Head of caudate nucleus (tissue), 42 donors: ENCODE measurements at regions of chr9 and their contacts with region 1.

Region 1: DNA sequence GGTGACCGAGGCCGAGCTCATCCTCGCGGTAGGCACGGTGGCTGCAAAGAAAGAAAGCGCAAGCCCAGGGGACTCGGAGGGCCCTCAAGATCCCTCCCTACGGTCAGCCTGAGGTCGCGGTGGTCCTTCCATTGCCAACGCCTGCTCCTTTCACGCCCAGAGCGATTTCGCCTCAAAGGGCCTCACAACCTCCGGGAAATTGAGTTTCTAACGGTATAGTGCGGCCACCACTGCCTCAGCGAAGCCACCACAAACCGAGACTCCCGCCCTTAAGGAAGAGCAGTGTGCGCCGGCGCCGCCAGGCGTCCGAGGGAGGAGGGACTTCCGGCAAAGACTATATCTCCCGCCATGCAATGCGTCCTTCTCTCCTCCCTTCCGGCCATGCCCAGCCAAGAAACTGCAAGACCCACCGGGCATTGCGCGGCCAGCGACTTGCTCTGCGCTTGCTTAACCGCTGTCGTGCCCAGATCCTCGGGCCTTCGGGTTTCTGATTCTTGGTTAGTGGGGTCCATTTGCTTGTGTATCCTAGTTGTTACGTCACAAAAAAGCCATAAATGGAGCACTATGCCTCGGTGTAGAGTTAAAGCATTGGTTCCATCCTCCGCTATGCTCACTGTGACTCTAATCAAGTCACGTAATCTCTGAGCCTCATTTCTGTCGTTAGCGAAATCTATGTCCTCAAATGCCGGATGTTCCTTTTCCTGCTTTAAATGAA is at the start of gene HAUS6:
- DNase-seq: peak; percentile 94 to 99 (median 97)

Region 2: DNA sequence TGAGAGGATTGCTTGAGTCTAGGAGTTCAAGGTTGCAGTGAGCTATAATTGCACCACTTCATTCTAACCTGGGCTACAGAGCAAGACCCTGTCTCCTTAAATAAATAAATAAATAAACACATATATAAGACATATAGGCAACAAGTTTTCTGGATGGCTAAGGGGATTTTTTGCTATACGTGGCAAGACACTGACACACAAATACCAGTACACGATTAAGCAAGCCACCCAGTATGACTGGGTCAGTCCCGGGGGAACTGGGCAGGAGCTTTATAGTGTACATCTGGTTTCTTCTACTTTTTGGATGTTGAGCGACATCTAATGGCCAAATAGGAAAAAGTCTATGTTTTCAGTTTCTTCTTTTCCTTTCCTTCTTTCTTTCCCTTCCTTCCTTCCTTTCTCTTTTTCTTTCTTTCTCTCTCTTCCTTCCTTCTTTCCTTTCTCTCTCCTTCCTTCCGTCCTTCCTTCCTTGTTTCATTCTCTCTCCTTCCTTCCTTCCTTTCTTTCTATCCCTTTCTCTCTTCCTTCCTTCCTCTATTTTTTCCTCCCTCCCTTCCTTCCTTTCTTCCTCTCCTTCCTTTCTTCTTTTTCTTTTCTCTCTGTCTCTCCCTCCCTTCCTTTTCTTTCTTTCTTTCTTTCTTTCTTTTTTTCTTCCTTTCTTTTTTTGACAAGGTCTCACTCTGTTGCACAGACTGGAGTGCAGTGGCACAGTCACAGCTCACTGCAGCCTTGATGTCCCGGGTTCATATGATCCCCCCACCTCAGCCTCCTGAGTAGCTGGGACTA is 71.5 kb after region 1 on chr9:
- intact Hi-C with region 1: loop called (anchors 10 kb)
- DNase-seq: peak in 9 of 42 donors; percentile 12 to 57 (median 34)

Region 3: DNA sequence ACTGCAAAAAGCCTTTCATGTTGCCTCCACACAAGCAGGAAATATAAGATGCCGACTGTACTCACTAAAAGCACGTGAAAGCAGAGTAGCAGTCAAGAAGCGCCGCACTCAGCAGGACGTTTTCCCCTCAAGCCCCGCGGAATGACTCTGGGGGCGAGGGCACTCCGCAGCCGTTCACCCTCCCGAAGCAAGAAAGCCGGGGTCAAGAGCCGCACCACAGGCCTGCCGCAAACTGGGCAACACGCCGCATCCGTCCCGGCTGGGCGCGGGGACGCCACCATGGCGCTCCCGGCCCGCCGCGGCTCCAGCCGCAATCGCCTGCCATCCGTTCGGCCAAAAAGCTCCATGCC is 276.9 kb after region 1 on chr9:
- intact Hi-C with region 1: loop called (anchors 2 kb)
- DNase-seq: peak in 17 of 42 donors; percentile 5 to 67 (median 35)